ENCODE measurements at regions of chr13 and their contacts with region 1.

Region 1: DNA sequence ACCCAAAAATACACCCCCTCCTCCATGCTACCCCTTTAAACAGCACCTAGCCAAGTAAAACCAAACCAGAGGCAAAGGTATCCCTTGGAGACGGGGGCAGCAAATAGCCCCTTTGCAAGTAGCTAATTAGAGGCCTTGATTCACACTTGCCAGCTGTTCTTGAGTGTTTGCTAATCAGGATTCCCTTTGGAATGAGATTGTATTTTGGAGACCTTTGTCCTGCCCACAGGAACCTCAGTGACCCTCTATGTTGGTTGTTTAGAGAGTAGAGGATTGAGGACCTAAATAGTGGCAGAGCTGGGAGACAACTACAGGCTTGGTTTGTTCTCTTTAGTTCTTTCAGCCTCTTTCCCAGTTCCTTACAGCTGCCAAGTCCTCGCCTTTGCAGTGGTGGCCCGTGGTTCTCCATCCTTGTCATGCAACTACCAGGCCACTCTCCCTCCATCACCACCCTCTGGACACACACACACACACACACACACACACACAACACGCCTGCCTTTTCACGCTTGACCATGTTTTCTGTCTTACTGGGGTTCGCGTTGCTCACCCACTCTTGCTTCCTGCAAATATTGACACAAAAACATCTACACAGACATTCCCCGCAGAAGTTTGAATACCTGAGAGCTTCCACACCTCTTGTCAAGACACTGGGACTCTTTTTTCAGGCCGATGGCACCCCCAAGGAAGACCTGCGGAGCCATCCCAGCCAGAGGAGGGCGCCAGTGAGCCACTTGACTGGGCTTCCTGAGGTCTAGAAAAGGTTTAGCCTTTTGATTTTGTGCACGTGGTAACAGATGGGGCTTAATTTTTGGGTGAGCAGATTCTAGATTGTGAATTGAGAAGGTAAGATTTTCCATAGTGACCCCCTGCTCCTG is 80.0 kb upstream of the GPR183 start:
- DNase-seq: peak; percentile 90
- H3K4me3 Mint-ChIP-seq: no peak overlapping the region
- H3K27ac Mint-ChIP-seq: peak overlapping the region; percentile 21
- H3K4me1 Mint-ChIP-seq: peaks cover 66% of the 10 kb centered on the region
- H3K27me3 Mint-ChIP-seq: no peaks in the 10 kb centered on the region

Region 2: DNA sequence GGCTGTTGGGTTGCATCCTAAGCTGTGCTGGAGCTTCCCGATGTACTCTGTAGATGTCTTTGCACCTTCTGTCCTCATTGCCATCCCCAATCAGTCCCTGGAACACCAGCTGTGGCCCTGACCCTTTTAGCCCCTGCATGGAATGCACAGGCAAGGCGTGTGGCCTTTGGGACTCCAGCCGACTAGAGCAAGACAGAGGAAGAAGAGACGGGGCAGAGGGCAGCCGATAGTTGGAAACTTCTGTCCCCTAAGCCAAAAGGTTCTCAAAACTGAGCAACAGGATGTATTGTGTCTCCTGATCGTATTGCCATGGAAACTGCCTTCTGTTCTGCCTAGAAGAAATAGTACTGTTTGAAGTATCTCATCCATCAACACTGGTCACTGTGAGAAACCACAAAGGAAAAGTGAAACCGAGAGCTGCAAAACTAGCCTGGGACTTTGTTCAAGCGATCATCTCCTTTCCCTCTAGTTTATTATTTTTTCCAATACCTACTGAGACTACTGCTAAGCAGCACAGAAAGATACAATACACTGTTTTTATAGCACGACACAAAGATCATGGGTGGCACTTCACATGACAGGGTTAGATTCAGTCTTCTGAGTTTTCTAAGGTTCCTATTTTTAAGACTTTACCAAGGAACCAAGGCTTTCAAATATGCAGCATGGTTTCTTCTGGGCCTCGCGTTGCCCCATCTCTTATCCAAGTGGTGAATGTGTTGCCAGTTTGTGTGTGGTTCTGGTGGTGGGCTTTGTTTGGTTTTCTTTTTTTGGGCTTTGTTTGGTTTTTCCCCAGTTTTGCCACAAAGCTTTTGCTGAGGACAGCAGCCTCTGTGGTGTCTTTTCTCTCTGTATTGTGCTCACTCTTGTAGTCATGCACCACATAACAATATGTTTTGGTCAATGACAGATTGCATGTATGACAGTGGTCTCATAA is 30.7 kb before region 1 on chr13:
- CTCF ChIA-PET with region 1: interaction called, 22 read pairs
- DNase-seq: peak; percentile 79
- H3K4me3 Mint-ChIP-seq: peak overlapping the region; percentile 53
- H3K27ac Mint-ChIP-seq: peak overlapping the region; percentile 95
- H3K4me1 Mint-ChIP-seq: peaks cover 99% of the 10 kb centered on the region
- H3K27me3 Mint-ChIP-seq: no peaks in the 10 kb centered on the region

Region 3: GRCh38 chr13:99374994-99375737 is 12.0 kb before region 1 on chr13:
- CTCF ChIA-PET with region 1: interaction called, 10 read pairs
- DNase-seq: peak; percentile 41
- H3K4me3 Mint-ChIP-seq: peak overlapping the region; percentile 29
- H3K27ac Mint-ChIP-seq: peak overlapping the region; percentile 86
- H3K4me1 Mint-ChIP-seq: peaks cover 91% of the 10 kb centered on the region
- H3K27me3 Mint-ChIP-seq: no peaks in the 10 kb centered on the region

Region 4: DNA sequence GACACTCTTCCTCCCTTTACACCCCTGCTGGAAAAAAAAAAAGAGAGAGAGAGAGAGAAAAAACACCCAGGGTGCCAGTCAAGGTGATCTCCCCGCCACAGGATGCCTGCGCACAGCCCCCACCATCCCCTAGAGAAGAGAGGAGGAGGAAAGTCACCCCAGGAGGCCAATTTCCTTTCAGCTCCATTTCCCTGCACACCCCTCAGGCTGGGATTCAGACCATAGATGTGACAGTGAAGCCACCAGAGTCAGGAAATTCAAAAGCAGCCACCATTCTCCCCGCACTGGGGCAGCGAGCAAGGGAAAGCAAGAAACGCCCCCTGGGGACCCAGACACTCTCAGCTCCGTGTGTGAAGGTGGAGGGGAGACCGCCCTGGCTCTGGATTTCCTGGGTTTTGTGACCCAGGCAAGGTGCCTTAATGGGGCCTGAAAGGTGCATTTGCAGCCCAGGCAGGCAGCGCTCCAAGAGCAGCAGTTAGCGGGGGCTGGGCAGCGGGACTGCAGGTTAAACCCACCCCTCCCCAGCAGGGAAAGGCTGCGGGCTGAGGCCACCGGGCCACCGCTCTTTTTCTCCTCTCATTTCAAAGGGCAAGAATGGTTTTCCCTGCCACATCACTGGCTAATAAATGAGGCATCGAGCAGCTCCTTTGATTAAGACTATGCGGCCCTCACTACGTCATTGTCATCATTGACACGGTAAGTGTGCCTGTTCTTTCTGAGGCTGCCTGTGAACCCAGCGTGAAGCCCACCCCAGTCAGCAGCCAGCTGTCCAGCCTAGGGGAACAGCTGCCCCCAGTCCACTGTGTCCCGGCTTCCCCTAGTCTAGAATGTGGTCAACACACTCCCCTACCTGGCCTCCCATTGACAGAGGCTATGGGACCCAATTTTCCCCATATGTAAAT is 30.3 kb after region 1 on chr13:
- CTCF ChIA-PET with region 1: interaction called, 29 read pairs
- DNase-seq: peak; percentile 43
- H3K4me3 Mint-ChIP-seq: peak overlapping the region; percentile 14
- H3K27ac Mint-ChIP-seq: peak overlapping the region; percentile 78
- H3K4me1 Mint-ChIP-seq: peaks cover 38% of the 10 kb centered on the region
- H3K27me3 Mint-ChIP-seq: peaks cover 31% of the 10 kb centered on the region

Region 5: GRCh38 chr13:99425485-99426341 is 38.6 kb after region 1 on chr13:
- CTCF ChIA-PET with region 1: interaction called, 29 read pairs
- DNase-seq: peak; percentile 76
- H3K4me3 Mint-ChIP-seq: peak overlapping the region; percentile 54
- H3K27ac Mint-ChIP-seq: peak overlapping the region; percentile 90
- H3K4me1 Mint-ChIP-seq: peaks cover 80% of the 10 kb centered on the region
- H3K27me3 Mint-ChIP-seq: peaks cover 15% of the 10 kb centered on the region